ENCODE measurements at regions of chr22 and their contacts with region 1.

Region 1: GRCh38 chr22:17281026-17281425 is 61.8 kb upstream of the ADA2 start:
- DNase-seq: no peak
- H3K4me3 Mint-ChIP-seq: no peak overlapping the region
- H3K27ac Mint-ChIP-seq: peak overlapping the region; percentile 81
- H3K4me1 Mint-ChIP-seq: peaks cover 30% of the 10 kb centered on the region
- H3K27me3 Mint-ChIP-seq: peaks cover 8% of the 10 kb centered on the region

Region 2: GRCh38 chr22:17266251-17266971 is 14.6 kb before region 1 on chr22:
- CTCF ChIA-PET with region 1: interaction called, 10 read pairs
- DNase-seq: peak; percentile 59
- H3K4me3 Mint-ChIP-seq: no peak overlapping the region
- H3K27ac Mint-ChIP-seq: peak overlapping the region; percentile 72
- H3K4me1 Mint-ChIP-seq: peaks cover 33% of the 10 kb centered on the region
- H3K27me3 Mint-ChIP-seq: peaks cover 25% of the 10 kb centered on the region

Measured in activated naive CD4-positive, alpha-beta T cell treated with anti-CD3 and anti-CD28 coated beads, Interleukin-2, amount 10 ng/mL, durations not matched to agents 7 days and 5 days (primary cell).